T-cell (primary cell): ENCODE measurements at regions of chr14 and their contacts with region 1.

Region 1: DNA sequence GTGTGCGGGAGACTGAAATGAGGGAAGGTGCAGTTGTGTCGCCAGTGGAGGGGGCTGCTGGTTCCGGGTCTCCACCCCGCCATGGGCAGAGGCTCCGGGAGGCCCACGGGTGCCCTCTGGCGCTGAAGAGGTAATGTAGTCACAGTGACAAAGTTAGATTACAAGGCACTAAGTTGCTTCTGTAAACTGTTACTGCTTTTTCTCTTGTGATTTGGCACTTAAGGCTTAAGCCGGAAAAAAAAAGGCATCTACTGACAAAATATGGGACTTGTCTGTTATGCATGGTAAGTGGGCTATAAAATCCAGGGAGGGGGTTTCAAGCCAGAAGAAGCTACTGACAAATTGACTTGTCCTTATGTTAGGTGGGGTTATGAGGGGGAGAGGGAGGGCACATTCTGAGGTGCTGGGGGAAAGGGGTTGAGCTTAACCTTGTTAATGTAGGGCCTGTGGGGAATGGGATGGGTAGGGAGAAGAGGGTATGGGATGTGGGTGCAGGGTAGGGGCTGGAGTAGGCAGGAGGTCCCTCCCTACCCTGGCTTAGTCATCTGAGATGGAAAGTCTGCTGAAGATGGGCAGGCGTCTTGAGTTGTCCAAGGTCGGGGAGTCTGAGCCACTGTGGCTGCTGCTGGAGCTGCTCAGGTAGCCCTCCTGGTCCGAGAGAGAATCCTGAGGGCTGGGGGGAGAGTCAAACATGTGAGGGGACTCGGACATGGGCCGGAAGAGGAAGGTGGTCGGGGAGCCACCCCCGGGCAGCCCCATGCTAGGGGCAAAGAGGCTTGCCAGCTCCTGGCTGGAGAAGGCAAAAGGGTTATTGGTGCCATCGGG is 3.7 kb downstream of the ZFP36L1 start:
- DNase-seq: peak; percentile 73 to 92 (median 88)
- ATAC-seq: peak; percentile 39 to 49 (median 46)
- H3K4me3 ChIP-seq: peak overlapping the region; percentile 95 to 100
- H3K4me3 Mint-ChIP-seq: peak overlapping the region; percentile 91 to 98 (median 96)
- H3K27ac ChIP-seq: peak overlapping the region; percentile 100
- H3K27ac Mint-ChIP-seq: peak overlapping the region; percentile 96 to 97
- H3K4me1 ChIP-seq: peaks cover 34 to 59% of the 10 kb centered on the region in 2 experiments
- H3K4me1 Mint-ChIP-seq: peaks cover 52 to 70% (median 57%) of the 10 kb centered on the region in 3 donors
- H3K27me3 ChIP-seq: no peaks in the 10 kb centered on the region
- H3K27me3 Mint-ChIP-seq: no peaks in the 10 kb centered on the region

Region 2: GRCh38 chr14:68248481-68249255 is 540.5 kb before region 1 on chr14:
- CTCF ChIA-PET with region 1: interaction called, 10 to 52 read pairs
- POLR2A ChIA-PET with region 1: interaction called in 1 of 2 experiments, 5 read pairs
- DNase-seq: peak in 6 of 35 experiments; percentile 4 to 77 (median 20)
- ATAC-seq: peak; percentile 64 to 83 (median 74)
- H3K4me3 ChIP-seq: no peak overlapping the region
- H3K4me3 Mint-ChIP-seq: no peak overlapping the region
- H3K27ac ChIP-seq: no peak overlapping the region
- H3K27ac Mint-ChIP-seq: peak overlapping the region; percentile 61 to 73
- H3K4me1 ChIP-seq: peaks cover 6 to 30% of the 10 kb centered on the region in 2 experiments
- H3K4me1 Mint-ChIP-seq: peaks cover 36 to 48% (median 41%) of the 10 kb centered on the region in 3 donors
- H3K27me3 ChIP-seq: no peaks in the 10 kb centered on the region
- H3K27me3 Mint-ChIP-seq: no peaks in the 10 kb centered on the region

Region 3: GRCh38 chr14:68548194-68549056 is 240.8 kb before region 1 on chr14:
- CTCF ChIA-PET with region 1: no interaction called
- POLR2A ChIA-PET with region 1: interaction called in 1 of 2 experiments, 10 read pairs
- DNase-seq: no peak
- ATAC-seq: no peak
- H3K4me3 ChIP-seq: no peak overlapping the region
- H3K4me3 Mint-ChIP-seq: no peak overlapping the region
- H3K27ac ChIP-seq: no peak overlapping the region
- H3K27ac Mint-ChIP-seq: no peak overlapping the region
- H3K4me1 ChIP-seq: peaks cover 0 to 6% of the 10 kb centered on the region in 2 experiments
- H3K4me1 Mint-ChIP-seq: peaks cover 11 to 12% (median 11%) of the 10 kb centered on the region in 3 donors
- H3K27me3 ChIP-seq: no peaks in the 10 kb centered on the region
- H3K27me3 Mint-ChIP-seq: no peaks in the 10 kb centered on the region

Region 4: DNA sequence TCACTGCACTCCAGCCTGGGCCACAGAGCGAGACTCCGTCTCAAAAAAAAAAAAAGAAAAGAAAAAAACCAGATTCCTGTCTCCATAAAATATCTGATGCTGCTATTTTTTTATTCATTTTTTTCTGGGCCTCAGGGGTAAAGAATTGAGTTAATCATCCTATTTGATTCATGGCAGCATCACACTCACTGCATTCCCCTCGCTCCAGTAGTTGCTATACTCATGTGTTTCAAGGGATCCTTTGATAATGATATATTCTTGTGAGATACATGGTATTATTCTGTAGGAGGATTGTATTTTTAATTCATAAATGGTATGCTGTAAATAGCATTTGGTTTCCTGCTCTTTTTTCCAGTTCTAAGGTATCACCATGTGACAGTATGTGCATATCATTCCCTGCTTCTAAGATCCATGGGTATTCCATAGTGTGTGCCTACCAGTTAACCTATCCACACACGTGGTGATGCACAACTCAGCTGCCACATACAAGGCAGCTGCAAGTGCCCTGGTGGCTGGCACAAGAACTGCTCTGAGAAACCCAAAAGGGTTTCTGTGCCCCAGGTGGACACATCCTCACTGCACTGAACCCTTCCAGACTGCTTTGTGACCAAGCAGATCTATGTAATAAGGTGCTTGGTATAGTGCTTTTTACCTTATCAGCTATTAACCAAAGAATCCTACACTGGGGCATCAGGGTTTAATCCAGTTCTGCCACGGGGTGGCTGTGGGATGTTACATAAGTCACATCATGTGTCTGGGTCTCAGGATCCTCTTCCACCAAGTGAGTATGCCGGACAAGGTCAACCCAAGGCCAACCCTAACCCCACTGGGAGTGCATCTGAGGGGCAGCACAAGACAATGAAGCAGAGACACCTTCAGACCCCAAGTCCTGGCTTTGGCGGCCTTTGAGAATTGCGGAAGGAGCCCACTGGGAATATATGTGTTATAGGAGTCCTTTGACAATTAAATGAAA is 70.9 kb before region 1 on chr14:
- CTCF ChIA-PET with region 1: interaction called in 1 of 2 experiments, 11 read pairs
- POLR2A ChIA-PET with region 1: no interaction called
- DNase-seq: peak in 2 of 35 experiments; percentile 10 to 22
- ATAC-seq: peak in 1 of 4 experiments; percentile 40
- H3K4me3 ChIP-seq: no peak overlapping the region
- H3K4me3 Mint-ChIP-seq: no peak overlapping the region
- H3K27ac ChIP-seq: no peak overlapping the region
- H3K27ac Mint-ChIP-seq: no peak overlapping the region
- H3K4me1 ChIP-seq: peaks cover 3 to 13% of the 10 kb centered on the region in 2 experiments
- H3K4me1 Mint-ChIP-seq: peaks cover 41 to 44% (median 43%) of the 10 kb centered on the region in 3 donors
- H3K27me3 ChIP-seq: no peaks in the 10 kb centered on the region
- H3K27me3 Mint-ChIP-seq: no peaks in the 10 kb centered on the region

Region 5: DNA sequence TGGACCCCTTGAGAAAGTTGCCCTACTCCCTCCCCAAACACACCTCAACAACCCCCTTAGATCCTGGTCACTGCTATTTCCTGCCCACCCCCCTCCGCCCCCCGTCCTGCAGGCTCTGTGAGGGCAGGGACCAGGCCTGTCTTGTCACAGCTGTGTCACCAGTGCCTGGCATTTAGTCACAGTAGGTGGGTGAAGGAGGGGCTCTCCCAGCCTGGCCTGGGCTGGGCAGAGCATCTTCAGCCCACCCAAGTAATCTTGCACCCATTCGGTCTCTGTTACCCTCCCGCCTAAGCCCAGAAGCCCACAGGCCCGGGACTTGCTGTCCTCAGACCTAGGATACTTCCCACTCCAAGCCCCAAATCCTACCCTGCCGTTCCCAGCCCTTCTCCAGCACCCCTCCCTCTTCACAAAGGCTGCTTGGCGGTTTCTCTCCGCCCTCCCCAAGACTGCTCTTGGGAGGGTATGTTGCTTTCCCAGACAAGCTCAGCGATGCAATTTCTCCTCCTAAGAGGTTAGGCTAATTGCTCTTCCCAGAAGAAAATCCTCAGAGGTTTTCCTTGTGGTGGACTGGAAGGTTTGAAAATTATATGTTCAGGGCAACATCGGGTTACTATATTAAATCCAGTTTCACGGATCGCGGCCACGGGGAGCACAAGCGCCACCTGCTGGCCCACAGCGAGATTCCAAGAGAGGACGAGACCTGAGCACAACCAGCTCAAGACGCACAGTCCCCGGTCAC is 54.4 kb after region 1 on chr14:
- CTCF ChIA-PET with region 1: interaction called, 3 to 10 read pairs
- POLR2A ChIA-PET with region 1: no interaction called
- DNase-seq: peak; percentile 46 to 85 (median 69)
- ATAC-seq: peak; percentile 61 to 89 (median 82)
- H3K4me3 ChIP-seq: peak overlapping the region in 1 of 2 donors; percentile 23
- H3K4me3 Mint-ChIP-seq: peak overlapping the region; percentile 25 to 50 (median 37)
- H3K27ac ChIP-seq: no peak overlapping the region
- H3K27ac Mint-ChIP-seq: no peak overlapping the region
- H3K4me1 ChIP-seq: peaks cover 6 to 19% of the 10 kb centered on the region in 2 experiments
- H3K4me1 Mint-ChIP-seq: peaks cover 19 to 32% (median 20%) of the 10 kb centered on the region in 3 donors
- H3K27me3 ChIP-seq: peaks cover 0 to 11% of the 10 kb centered on the region in 2 experiments
- H3K27me3 Mint-ChIP-seq: peaks cover 0 to 8% of the 10 kb centered on the region in 2 donors